ENCODE measurements at regions of chr2 and their contacts with region 1.

Region 1: DNA sequence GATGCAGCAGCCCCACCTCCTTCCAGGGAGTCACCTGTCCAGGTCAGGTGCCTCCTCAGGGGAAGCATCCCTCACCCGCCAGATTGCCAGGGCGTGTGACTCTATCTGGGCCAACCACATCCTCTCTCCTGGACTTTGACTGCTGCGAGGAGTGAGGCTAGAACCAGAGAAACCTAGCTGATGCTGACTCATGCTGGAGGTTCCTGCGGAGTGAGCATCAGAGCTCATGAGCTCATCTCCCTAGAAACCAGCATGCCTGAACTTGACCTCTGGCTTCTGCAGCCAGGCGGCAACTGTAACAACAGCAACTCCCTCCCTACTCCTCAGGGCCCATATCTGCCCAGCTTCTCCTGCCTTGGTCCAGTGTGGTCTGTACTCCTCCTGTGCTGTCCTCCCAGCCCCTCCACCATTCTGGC is 28.3 kb upstream of the NT5DC4 start:
- DNase-seq: peak; percentile 86
- H3K4me3 Mint-ChIP-seq: peak overlapping the region; percentile 17
- H3K27ac Mint-ChIP-seq: peak overlapping the region; percentile 90
- H3K4me1 Mint-ChIP-seq: peaks cover 36% of the 10 kb centered on the region
- H3K27me3 Mint-ChIP-seq: no peaks in the 10 kb centered on the region

Region 2: GRCh38 chr2:112301171-112301584 is 391.3 kb before region 1 on chr2:
- CTCF ChIA-PET with region 1: no interaction called
- POLR2A ChIA-PET with region 1: no interaction called
- DNase-seq: no peak
- H3K4me3 Mint-ChIP-seq: no peak overlapping the region
- H3K27ac Mint-ChIP-seq: no peak overlapping the region
- H3K4me1 Mint-ChIP-seq: peaks cover 3% of the 10 kb centered on the region
- H3K27me3 Mint-ChIP-seq: no peaks in the 10 kb centered on the region

Region 3: GRCh38 chr2:112572022-112572421 is 120.5 kb before region 1 on chr2:
- CTCF ChIA-PET with region 1: no interaction called
- POLR2A ChIA-PET with region 1: no interaction called
- DNase-seq: no peak
- H3K4me3 Mint-ChIP-seq: no peak overlapping the region
- H3K27ac Mint-ChIP-seq: no peak overlapping the region
- H3K4me1 Mint-ChIP-seq: peaks cover 1% of the 10 kb centered on the region
- H3K27me3 Mint-ChIP-seq: no peaks in the 10 kb centered on the region

Region 4: DNA sequence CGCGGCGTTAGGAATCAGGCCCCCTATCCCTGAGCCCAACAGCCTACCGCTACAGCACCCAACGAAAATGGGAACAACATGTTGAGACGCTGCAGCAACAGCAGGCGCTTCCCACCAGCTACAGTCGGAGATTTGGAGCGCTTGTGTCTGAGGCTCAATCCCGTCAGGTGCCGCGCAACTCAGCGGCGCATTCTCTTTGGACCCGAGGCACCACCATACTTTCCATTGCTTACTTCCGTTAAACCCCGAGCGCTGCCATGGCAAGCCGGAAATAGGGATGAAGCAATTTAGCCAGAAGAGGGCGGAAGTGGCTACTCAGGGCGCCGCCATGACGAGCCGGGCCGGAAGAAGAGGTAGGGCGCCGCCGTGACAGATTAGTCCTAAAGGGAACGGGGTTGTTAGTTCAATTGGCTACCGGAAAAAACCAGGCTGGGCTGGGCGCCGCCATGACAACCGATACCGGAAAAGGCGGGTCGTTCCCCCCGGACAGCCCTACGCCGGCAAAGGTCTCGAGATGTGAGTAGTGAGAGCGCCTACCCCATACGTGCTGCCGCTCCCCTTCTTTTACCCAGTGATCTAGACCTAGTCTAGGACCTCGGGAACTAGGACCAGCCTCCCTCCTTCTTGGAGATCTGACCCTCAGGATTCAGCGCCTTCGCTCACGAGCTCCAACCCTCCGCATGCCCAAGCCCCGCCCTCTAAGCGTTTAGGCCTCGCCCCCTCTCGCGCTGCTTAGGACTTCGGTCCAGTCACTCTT is 108.2 kb before region 1 on chr2 and contains the start of gene CHCHD5:
- CTCF ChIA-PET with region 1: interaction called, 4 read pairs
- POLR2A ChIA-PET with region 1: interaction called, 13 read pairs
- DNase-seq: peak; percentile 97
- H3K4me3 Mint-ChIP-seq: peak within 1 kb of the TSS; percentile 97
- H3K27ac Mint-ChIP-seq: peak within 1 kb of the TSS; percentile 95
- H3K4me1 Mint-ChIP-seq: peaks cover 47% of the 10 kb centered on the region
- H3K27me3 Mint-ChIP-seq: no peaks in the 10 kb centered on the region
- total RNA-seq, gene CHCHD5: 40.0 to 47.5 TPM

Region 5: DNA sequence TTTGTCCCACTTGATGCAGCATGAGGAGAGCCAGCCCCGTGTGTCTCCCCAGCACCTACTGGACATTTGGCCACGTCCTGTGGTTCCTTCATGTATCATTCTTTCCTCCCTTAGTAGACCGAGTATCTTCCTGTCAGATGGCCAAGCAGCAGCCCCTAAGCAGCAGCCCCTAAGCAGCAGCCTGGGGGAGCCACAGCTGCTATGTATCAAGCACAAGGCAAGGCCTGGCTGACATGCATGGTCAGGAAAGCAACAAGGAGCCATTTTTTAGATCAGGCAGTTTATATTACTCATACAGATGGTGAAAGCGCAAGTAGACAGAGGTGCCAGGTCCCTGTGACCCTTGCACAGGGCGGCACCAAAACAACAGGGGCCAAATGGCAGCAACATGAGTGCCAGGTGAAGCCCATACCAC is 86.0 kb before region 1 on chr2:
- CTCF ChIA-PET with region 1: interaction called, 30 read pairs
- POLR2A ChIA-PET with region 1: interaction called, 9 read pairs
- DNase-seq: no peak
- H3K4me3 Mint-ChIP-seq: no peak overlapping the region
- H3K27ac Mint-ChIP-seq: no peak overlapping the region
- H3K4me1 Mint-ChIP-seq: peaks cover 7% of the 10 kb centered on the region
- H3K27me3 Mint-ChIP-seq: peaks cover 17% of the 10 kb centered on the region

Region 6: DNA sequence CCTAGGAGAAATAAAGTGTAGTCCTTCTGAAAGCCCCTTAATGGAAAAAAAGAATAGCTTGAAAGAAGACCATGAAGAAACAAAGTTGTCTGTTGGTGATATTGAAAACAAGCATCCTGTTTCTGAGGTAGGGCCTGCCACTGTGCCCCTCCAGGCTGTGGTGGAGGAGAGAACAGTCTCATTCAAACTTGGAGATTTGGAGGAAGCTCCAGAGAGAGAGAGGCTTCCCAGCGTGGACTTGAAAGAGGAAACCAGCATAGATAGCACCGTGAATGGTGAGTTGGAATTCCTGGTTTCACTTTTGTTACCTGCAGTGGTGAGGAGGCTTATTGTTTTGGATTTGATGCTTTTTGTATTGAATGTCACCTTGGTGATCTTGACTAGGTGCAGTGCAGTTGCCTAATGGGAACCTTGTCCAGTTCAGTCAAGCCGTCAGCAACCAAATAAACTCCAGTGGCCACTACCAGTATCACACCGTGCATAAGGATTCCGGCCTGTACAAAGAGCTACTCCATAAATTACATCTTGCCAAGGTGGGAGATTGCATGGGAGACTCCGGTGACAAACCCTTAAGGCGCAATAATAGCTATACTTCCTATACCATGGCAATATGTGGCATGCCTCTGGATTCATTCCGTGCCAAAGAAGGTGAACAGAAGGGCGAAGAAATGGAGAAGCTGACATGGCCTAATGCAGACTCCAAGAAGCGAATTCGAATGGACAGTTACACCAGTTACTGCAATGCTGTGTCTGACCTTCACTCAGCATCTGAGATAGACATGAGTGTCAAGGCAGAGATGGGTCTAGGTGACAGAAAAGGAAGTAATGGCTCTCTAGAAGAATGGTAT is 33.5 kb before region 1 on chr2:
- CTCF ChIA-PET with region 1: interaction called, 9 read pairs
- POLR2A ChIA-PET with region 1: interaction called, 12 read pairs
- DNase-seq: no peak
- H3K4me3 Mint-ChIP-seq: no peak overlapping the region
- H3K27ac Mint-ChIP-seq: peak overlapping the region; percentile 71
- H3K4me1 Mint-ChIP-seq: peaks cover 77% of the 10 kb centered on the region
- H3K27me3 Mint-ChIP-seq: no peaks in the 10 kb centered on the region

Region 7: GRCh38 chr2:112706170-112706664 is 13.7 kb after region 1 on chr2:
- CTCF ChIA-PET with region 1: interaction called, 70 read pairs
- POLR2A ChIA-PET with region 1: interaction called, 50 read pairs
- DNase-seq: peak; percentile 93
- H3K4me3 Mint-ChIP-seq: peak overlapping the region; percentile 55
- H3K27ac Mint-ChIP-seq: peak overlapping the region; percentile 82
- H3K4me1 Mint-ChIP-seq: peaks cover 64% of the 10 kb centered on the region
- H3K27me3 Mint-ChIP-seq: peaks cover 3% of the 10 kb centered on the region